Head of caudate nucleus (tissue), 42 donors: ENCODE measurements at regions of chr20 and their contacts with region 1.

Region 1: GRCh38 chr20:47886460-47887041 is 101.3 kb upstream of the SULF2 start:
- DNase-seq: no peak

Region 2: GRCh38 chr20:47809111-47809912 is 77.2 kb before region 1 on chr20:
- intact Hi-C with region 1: no loop called
- DNase-seq: no peak

Region 3: DNA sequence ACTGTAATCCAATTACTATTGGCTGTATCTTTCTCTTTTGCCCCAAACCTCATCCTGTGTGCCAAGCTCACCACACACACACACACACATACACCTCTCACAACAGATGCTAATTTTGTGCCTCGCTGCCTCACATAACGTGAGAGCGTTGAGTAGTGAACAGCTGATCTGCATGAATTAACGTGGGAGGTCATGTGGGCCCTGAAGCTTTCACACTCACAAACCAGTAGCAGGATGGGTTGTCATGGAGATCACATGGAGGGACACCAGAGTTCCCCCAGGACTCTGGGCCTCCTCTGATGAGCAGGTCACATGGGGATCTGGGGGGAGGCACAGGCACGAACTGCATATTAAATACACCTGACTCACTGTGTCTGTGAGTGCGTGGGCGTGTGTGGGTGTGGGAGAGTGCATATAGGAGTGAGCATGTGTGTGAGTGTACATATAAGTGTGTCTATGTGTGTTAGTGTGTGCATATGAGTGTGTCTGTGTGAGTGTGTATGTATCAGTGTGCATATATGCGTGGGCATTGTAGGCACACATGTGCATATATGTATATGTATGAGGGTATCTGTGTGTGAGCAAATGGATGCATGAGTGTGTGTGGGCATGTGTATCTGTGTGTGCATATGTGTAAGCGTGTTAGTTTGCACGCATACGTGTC is 38.6 kb before region 1 on chr20:
- intact Hi-C with region 1: loop called (anchors 10 kb)
- DNase-seq: peak in 24 of 42 donors; percentile 2 to 58 (median 33)